ENCODE measurements at regions of chr13 and their contacts with region 1.

Region 1: DNA sequence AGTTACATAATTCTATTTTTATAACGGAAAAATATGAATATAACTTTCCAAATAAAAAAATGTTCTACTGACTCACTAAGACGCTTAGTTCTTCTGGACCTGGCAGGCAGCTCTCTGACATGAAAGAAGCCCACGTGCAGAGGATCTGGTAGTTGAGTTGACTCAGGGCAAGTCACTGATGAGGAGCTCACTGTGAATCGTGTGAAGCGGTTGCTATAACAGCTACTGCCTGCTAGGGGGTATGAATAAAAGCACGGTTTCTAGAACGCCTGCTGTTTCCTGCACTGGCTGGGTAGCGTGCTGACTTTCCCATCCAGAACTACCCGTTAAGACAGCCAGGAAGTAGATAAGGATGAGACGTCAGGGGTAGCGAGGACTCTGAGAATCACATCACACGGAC is 54.7 kb upstream of the WASF3 start:
- DNase-seq: peak; percentile 52
- H3K4me3 Mint-ChIP-seq: no peak overlapping the region
- H3K27ac Mint-ChIP-seq: no peak overlapping the region
- H3K4me1 Mint-ChIP-seq: peaks cover 9% of the 10 kb centered on the region
- H3K27me3 Mint-ChIP-seq: no peaks in the 10 kb centered on the region

Region 2: GRCh38 chr13:26433776-26434175 is 69.0 kb before region 1 on chr13:
- CTCF ChIA-PET with region 1: no interaction called
- POLR2A ChIA-PET with region 1: no interaction called
- intact Hi-C with region 1: no loop called
- DNase-seq: no peak
- H3K4me3 Mint-ChIP-seq: no peak overlapping the region
- H3K27ac Mint-ChIP-seq: no peak overlapping the region
- H3K4me1 Mint-ChIP-seq: no peaks in the 10 kb centered on the region
- H3K27me3 Mint-ChIP-seq: peaks cover 3% of the 10 kb centered on the region

Region 3: DNA sequence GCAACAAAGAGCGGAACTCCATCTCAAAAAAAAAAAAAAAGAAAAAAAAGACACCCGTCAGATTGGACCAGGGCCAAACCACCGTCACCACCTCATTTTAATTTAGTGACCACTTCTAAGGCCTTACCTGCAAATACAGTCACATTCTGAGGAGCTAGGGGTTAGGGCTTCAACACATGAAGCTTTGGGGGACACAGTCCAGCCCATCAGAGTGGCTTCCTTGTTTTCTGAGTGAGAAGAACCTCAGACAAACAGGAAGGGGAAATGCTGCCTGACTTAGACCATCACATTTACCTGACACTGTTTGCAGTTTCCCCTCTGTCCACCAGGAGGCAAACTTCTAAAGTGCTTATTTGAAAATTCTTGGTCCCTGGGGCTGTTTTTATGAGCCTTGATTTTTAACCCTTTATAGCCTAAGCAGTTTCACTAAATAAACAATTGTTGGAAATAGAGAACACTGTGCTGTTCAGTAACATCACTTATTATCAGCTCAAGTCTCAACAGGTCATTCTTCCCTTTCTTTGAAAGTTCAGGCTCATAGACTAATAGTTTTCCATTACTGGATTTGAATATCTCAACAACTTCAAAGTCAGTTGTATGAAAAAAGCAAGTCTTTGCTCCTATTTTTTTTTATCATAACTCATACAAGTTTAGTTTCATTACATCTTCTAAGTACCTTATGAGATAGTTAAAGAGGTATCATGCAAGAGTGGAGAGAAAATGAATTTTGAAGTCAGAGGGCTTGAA is 20.2 kb before region 1 on chr13:
- CTCF ChIA-PET with region 1: interaction called, 33 read pairs
- POLR2A ChIA-PET with region 1: no interaction called
- intact Hi-C with region 1: no loop called
- DNase-seq: peak; percentile 72
- H3K4me3 Mint-ChIP-seq: no peak overlapping the region
- H3K27ac Mint-ChIP-seq: peak overlapping the region; percentile 8
- H3K4me1 Mint-ChIP-seq: peaks cover 13% of the 10 kb centered on the region
- H3K27me3 Mint-ChIP-seq: no peaks in the 10 kb centered on the region

Measured in activated CD4-positive, alpha-beta memory T cell treated with anti-CD3 and anti-CD28 coated beads for 36 hours (primary cell).